ENCODE measurements at regions of chr10 and their contacts with region 1.

Region 1: DNA sequence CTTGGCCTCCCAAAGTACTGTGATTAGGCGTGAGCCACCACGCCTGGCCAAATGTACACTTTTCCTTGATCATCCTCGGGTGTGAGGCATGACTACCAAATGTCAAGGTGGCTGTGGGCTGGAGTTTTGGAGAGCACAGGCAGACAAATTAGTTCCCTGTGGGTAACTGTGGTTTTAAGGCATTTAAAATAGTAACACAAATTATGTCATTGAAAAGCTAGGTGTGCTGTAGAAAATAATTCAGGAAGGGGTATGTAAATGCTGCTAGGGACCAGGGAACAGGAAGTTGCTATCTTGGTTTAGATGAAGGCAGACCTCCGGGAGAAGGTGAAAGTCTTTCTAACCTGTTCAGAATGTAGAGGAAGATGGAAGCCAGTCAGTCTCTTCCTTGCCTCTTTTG is 9.9 kb downstream of the GLRX3 start:
- DNase-seq: no peak
- ATAC-seq: no peak
- H3K4me3 ChIP-seq: no peak overlapping the region
- H3K4me3 Mint-ChIP-seq: no peak overlapping the region
- H3K27ac ChIP-seq: no peak overlapping the region
- H3K27ac Mint-ChIP-seq: no peak overlapping the region
- H3K4me1 ChIP-seq: peaks cover 3 to 7% of the 10 kb centered on the region in 2 experiments
- H3K4me1 Mint-ChIP-seq: peaks cover 42 to 50% (median 49%) of the 10 kb centered on the region in 3 donors
- H3K27me3 ChIP-seq: no peaks in the 10 kb centered on the region
- H3K27me3 Mint-ChIP-seq: no peaks in the 10 kb centered on the region

Region 2: GRCh38 chr10:129448086-129448485 is 698.0 kb before region 1 on chr10:
- CTCF ChIA-PET with region 1: no interaction called
- POLR2A ChIA-PET with region 1: interaction called in 1 of 2 experiments, 13 read pairs
- DNase-seq: no peak
- ATAC-seq: no peak
- H3K4me3 ChIP-seq: no peak overlapping the region
- H3K4me3 Mint-ChIP-seq: no peak overlapping the region
- H3K27ac ChIP-seq: no peak overlapping the region
- H3K27ac Mint-ChIP-seq: no peak overlapping the region
- H3K4me1 ChIP-seq: no peaks in the 10 kb centered on the region
- H3K4me1 Mint-ChIP-seq: no peaks in the 10 kb centered on the region
- H3K27me3 ChIP-seq: peaks cover 0 to 10% of the 10 kb centered on the region in 2 experiments
- H3K27me3 Mint-ChIP-seq: peaks cover 5 to 15% of the 10 kb centered on the region in 2 donors

Region 3: DNA sequence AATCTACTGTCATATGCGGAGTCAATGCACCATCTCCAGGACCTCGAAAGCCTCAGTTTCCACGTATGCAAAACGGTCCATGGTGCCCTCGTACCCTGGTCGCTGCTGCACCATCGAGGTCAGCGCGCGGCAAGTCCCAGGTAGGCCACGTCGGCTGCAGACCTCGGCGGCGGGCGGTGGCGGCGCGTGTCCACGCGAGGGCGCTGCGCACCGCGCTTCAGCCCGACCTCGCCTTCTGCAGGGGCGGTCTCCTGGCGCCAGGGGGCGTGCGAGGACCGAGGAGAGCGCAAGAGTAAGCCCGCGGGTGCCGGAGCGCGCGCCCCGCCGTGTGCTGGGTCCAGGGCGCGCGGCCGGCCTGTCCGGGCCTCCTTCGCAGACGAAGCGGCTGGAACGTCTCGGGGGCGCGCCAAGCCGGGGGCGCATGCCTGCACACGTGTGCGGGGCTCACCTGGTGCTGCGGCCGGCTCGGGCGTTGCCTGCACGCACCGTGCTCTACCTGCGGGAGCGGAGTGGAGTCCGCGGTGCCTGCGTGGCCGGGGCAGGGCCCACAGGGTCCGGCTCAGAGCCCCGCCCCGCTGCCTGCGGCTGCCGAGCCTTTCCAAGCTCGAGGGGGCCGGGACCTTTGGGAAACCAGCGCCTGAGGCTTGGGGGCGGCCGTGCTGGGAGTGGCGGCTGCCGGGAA is 44.2 kb after region 1 on chr10:
- CTCF ChIA-PET with region 1: interaction called in 1 of 2 experiments, 14 read pairs
- POLR2A ChIA-PET with region 1: no interaction called
- DNase-seq: peak; percentile 64 to 93 (median 85)
- ATAC-seq: peak; percentile 92 to 95 (median 93)
- H3K4me3 ChIP-seq: peak overlapping the region; percentile 23 to 52
- H3K4me3 Mint-ChIP-seq: peak overlapping the region in 1 of 3 donors; percentile 35
- H3K27ac ChIP-seq: no peak overlapping the region
- H3K27ac Mint-ChIP-seq: no peak overlapping the region
- H3K4me1 ChIP-seq: peaks cover 0 to 14% of the 10 kb centered on the region in 2 experiments
- H3K4me1 Mint-ChIP-seq: peaks cover 5 to 8% (median 6%) of the 10 kb centered on the region in 3 donors
- H3K27me3 ChIP-seq: peaks cover 0 to 12% of the 10 kb centered on the region in 2 experiments
- H3K27me3 Mint-ChIP-seq: peaks cover 8 to 9% of the 10 kb centered on the region in 2 donors

Region 4: DNA sequence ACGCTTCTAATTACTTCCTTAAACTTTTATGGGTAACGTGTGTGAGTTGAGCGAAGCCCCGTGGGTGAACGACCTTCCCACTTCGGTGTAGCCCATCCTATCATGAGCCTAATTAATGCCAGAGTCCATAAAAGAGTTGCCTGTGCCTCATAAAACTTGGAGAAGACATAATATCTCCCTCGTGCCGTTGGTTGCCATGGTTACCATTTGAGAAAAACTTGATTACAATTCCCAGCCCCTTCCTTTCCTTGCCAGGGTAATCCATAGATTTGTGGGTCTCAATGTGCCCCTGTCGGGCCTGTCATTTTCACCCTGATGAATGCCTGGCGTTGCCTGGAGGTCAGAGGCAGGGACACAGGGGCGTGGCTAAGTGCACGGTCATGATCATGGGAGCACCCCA is 117.2 kb after region 1 on chr10:
- CTCF ChIA-PET with region 1: no interaction called
- POLR2A ChIA-PET with region 1: no interaction called
- DNase-seq: no peak
- ATAC-seq: no peak
- H3K4me3 ChIP-seq: no peak overlapping the region
- H3K4me3 Mint-ChIP-seq: no peak overlapping the region
- H3K27ac ChIP-seq: no peak overlapping the region
- H3K27ac Mint-ChIP-seq: no peak overlapping the region
- H3K4me1 ChIP-seq: no peaks in the 10 kb centered on the region
- H3K4me1 Mint-ChIP-seq: no peaks in the 10 kb centered on the region
- H3K27me3 ChIP-seq: no peaks in the 10 kb centered on the region
- H3K27me3 Mint-ChIP-seq: no peaks in the 10 kb centered on the region

Measured in T-cell (primary cell).